ENCODE measurements at regions of chr17 and their contacts with region 1.

Region 1: GRCh38 chr17:44170499-44171201 is at the start of gene ASB16:
- DNase-seq: no peak
- ATAC-seq: peak; percentile 40
- H3K4me3 ChIP-seq: peak within 1 kb of the TSS; percentile 42 to 70 (median 59); a peak in 5 of 6 replicates
- H3K27ac ChIP-seq: no peak within 1 kb of the TSS
- H3K4me1 ChIP-seq: peaks cover 41% of the 10 kb centered on the region
- H3K27me3 ChIP-seq: no peaks in the 10 kb centered on the region
- CTCF ChIP-seq: peak; percentile 76
- EP300 ChIP-seq: no peak
- POLR2A ChIP-seq: no peak
- RAD21 ChIP-seq: no peak
- total RNA-seq, gene ASB16: 0.07 TPM in 1 of 2 replicates, not detected in the other

Region 2: GRCh38 chr17:43940630-43941029 is 230.0 kb before region 1 on chr17:
- CTCF ChIA-PET with region 1: no interaction called
- POLR2A ChIA-PET with region 1: no interaction called
- in situ Hi-C with region 1: loop called (anchors 5 kb)
- intact Hi-C with region 1: no loop called
- DNase-seq: peak; percentile 73
- ATAC-seq: peak; percentile 87
- H3K4me3 ChIP-seq: no peak overlapping the region
- H3K27ac ChIP-seq: no peak overlapping the region
- H3K4me1 ChIP-seq: peaks cover 5% of the 10 kb centered on the region
- H3K27me3 ChIP-seq: peaks cover 18 to 73% of the 10 kb centered on the region in 2 experiments
- CTCF ChIP-seq: peak; percentile 93
- EP300 ChIP-seq: no peak
- POLR2A ChIP-seq: no peak
- RAD21 ChIP-seq: peak; percentile 86

Region 3: GRCh38 chr17:44086364-44087311 is 84.0 kb before region 1 on chr17:
- CTCF ChIA-PET with region 1: interaction called, 21 read pairs
- POLR2A ChIA-PET with region 1: interaction called, 8 read pairs
- in situ Hi-C with region 1: no loop called
- intact Hi-C with region 1: loop called (anchors 1 kb)
- DNase-seq: peak; percentile 83
- ATAC-seq: peak; percentile 63
- H3K4me3 ChIP-seq: peak overlapping the region in 1 of 3 experiments; percentile 12; a peak in 1 of 6 replicates
- H3K27ac ChIP-seq: peak overlapping the region; percentile 15
- H3K4me1 ChIP-seq: peaks cover 31% of the 10 kb centered on the region
- H3K27me3 ChIP-seq: no peaks in the 10 kb centered on the region
- CTCF ChIP-seq: 0 out of 2 replicates have a peak, but pooled peaks have one; percentile 21
- EP300 ChIP-seq: 0 out of 4 replicates have a peak, but pooled peaks of 1 of the 2 experiments have one; percentile 15
- POLR2A ChIP-seq: peak in 1 of 2 experiments; percentile 13; a peak in 1 of 4 replicates
- RAD21 ChIP-seq: 0 out of 2 replicates have a peak, but pooled peaks have one; percentile 22

Region 4: DNA sequence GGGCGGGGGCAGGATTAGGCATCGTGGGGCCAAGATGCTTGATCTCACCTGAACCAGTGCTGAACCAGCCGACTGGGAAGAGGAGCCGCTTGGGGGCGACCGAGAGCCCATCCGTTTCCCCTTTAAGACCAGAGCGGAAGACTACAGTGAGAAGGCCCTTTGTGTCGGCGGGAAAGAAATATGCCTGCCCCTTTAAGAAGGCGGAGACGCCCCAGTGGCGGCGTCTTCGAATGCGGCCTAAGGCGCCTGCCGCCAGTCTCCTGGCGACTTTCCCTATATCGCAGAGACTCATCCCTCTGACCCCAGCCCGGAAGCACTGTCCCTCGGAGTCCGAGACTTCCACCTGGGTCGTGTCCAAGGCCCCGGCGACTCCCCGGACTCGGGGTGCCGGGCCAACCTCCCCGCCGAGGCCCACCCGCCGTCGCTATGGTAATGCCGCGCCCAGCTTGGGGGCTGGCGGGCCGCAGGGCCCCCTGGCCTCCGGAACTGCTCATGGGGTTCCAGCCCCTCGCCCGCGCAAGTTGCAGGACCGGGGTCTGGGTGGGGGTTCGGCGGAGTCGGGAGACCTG is 28.8 kb before region 1 on chr17 and contains the start of gene HROB:
- CTCF ChIA-PET with region 1: interaction called, 8 read pairs
- POLR2A ChIA-PET with region 1: interaction called, 4 read pairs
- in situ Hi-C with region 1: no loop called
- intact Hi-C with region 1: loop called (anchors 1 kb)
- DNase-seq: peak; percentile 92
- ATAC-seq: peak; percentile 79
- H3K4me3 ChIP-seq: peak within 1 kb of the TSS; percentile 85 to 100 (median 99)
- H3K27ac ChIP-seq: peak within 1 kb of the TSS; percentile 85
- H3K4me1 ChIP-seq: peaks cover 46% of the 10 kb centered on the region
- H3K27me3 ChIP-seq: no peaks in the 10 kb centered on the region
- CTCF ChIP-seq: peak; percentile 93
- EP300 ChIP-seq: peak in 1 of 2 experiments; percentile 65; a peak in 3 of 4 replicates
- POLR2A ChIP-seq: peak; percentile 35 to 43; a peak in 1 of 4 replicates
- RAD21 ChIP-seq: peak; percentile 74; the same call in 1 of the 2 replicates
- total RNA-seq, gene HROB: 6.7 and 7.1 TPM in 2 replicates

Region 5: GRCh38 chr17:44186307-44187130 is 15.9 kb after region 1 on chr17 and contains the start of gene TMUB2:
- CTCF ChIA-PET with region 1: no interaction called
- POLR2A ChIA-PET with region 1: interaction called, 13 read pairs
- in situ Hi-C with region 1: no loop called
- intact Hi-C with region 1: no loop called
- DNase-seq: peak; percentile 99
- ATAC-seq: peak; percentile 81
- H3K4me3 ChIP-seq: peak within 1 kb of the TSS; percentile 95 to 97 (median 96)
- H3K27ac ChIP-seq: peak within 1 kb of the TSS; percentile 91
- H3K4me1 ChIP-seq: peaks cover 55% of the 10 kb centered on the region
- H3K27me3 ChIP-seq: no peaks in the 10 kb centered on the region; a peak in 1 of 5 replicates
- CTCF ChIP-seq: peak; percentile 16; the same call in 1 of the 2 replicates
- EP300 ChIP-seq: peak in 1 of 2 experiments; percentile 34; a peak in 1 of 4 replicates
- POLR2A ChIP-seq: peak; percentile 95 to 97
- RAD21 ChIP-seq: peak; percentile 9; the same call in 1 of the 2 replicates
- total RNA-seq, gene TMUB2: 18.7 and 26.9 TPM in 2 replicates

Region 6: GRCh38 chr17:44210342-44211192 is 39.9 kb after region 1 on chr17:
- CTCF ChIA-PET with region 1: no interaction called
- POLR2A ChIA-PET with region 1: no interaction called
- in situ Hi-C with region 1: no loop called
- intact Hi-C with region 1: no loop called
- DNase-seq: no peak
- ATAC-seq: peak; percentile 48
- H3K4me3 ChIP-seq: no peak overlapping the region
- H3K27ac ChIP-seq: no peak overlapping the region
- H3K4me1 ChIP-seq: no peaks in the 10 kb centered on the region
- H3K27me3 ChIP-seq: no peaks in the 10 kb centered on the region
- CTCF ChIP-seq: peak; percentile 51
- EP300 ChIP-seq: no peak
- POLR2A ChIP-seq: no peak
- RAD21 ChIP-seq: peak; percentile 47